Activated CD4-positive, alpha-beta memory T cell treated with anti-CD3 and anti-CD28 coated beads, Interleukin-2, amount 10 ng/mL, durations not matched to agents 7 days and 5 days (primary cell): ENCODE measurements at regions of chr3 and their contacts with region 1.

Region 1: DNA sequence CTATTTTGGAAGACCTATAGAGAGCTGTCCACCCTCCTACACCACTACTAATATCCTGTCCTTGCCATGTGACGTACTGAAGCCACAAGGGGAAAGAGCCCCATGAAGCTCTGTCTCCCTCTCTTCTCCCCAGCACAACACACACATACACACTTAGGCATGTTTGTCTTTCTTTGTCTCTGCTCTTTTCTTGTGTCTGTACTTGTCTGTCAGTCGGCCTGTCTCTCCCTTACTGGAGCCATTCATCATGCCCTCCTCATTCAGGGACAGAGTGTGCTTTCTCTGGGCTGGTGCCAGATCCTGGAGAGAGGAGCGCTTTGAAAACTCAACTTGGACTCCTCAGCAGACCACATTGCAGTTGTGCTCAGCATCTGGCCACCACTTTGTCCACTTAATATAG is 47.6 kb downstream of the PSMD6 start:
- DNase-seq: no peak
- H3K4me3 Mint-ChIP-seq: no peak overlapping the region
- H3K27ac Mint-ChIP-seq: peak overlapping the region; percentile 50
- H3K4me1 Mint-ChIP-seq: peaks cover 94% of the 10 kb centered on the region
- H3K27me3 Mint-ChIP-seq: no peaks in the 10 kb centered on the region

Region 2: DNA sequence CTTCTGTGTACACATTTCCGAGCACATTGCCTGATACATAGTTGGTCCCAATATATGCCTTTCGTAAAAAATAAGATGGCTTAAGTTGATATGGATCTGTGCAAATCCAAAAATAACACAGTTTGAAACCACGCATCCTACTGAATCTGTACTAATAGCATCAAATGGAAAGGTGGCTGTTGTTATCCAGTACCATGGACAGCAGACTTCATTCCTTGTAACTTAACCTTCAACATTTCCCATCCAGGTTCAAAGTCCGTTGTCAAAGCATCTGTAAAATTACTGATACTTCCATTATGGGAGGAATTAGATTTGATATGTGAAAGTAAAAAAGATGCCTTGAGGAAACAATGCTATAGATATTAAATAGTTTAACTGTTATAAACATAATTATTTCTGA is 222.2 kb before region 1 on chr3:
- CTCF ChIA-PET with region 1: no interaction called
- POLR2A ChIA-PET with region 1: no interaction called
- DNase-seq: no peak
- H3K4me3 Mint-ChIP-seq: no peak overlapping the region
- H3K27ac Mint-ChIP-seq: no peak overlapping the region
- H3K4me1 Mint-ChIP-seq: no peaks in the 10 kb centered on the region
- H3K27me3 Mint-ChIP-seq: no peaks in the 10 kb centered on the region

Region 3: DNA sequence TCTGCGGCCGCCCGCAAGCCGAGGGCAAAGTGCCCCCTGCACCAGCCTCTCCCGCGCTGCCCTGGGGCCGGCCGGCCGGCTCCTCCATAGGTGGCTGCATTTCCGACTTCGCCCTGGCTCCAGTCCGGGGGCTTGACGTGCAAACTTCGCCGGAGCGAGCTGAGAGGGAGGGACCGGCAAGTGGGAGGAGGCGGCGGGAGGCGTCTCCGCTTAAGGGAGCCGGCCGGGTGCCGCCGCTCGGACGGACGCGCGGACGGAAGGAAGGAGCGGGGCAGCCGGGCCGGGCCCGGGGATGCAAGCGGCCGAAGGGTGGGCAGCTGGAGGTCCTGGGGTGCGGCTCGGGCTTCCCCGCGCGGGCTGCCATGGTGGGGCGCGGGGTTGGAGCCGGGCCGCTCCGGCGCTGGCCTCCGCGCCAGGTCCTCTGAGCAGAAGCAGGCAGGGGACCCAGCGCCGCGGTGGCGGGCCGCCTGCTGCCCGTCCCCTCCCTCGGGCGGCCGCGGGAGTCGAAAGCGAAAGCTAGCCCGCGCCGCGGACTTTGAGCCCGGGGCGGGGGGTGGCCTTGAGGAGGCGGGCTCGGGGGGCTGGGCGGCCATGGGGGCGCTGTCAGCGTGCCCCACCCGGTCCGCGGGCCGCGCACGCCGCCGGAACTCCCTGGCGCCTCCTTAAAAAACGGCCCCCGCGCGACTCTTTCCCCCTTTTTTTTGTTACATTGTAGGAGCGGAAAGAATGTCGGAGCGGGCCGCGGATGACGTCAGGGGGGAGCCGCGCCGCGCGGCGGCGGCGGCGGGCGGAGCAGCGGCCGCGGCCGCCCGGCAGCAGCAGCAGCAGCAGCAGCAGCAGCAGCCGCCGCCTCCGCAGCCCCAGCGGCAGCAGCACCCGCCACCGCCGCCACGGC is 63.6 kb before region 1 on chr3 and contains the start of gene SCAANT1:
- CTCF ChIA-PET with region 1: interaction called, 3 read pairs
- POLR2A ChIA-PET with region 1: interaction called, 32 read pairs
- DNase-seq: peak; percentile 80
- H3K4me3 Mint-ChIP-seq: peak within 1 kb of the TSS; percentile 85
- H3K27ac Mint-ChIP-seq: peak within 1 kb of the TSS; percentile 96
- H3K4me1 Mint-ChIP-seq: peaks cover 51% of the 10 kb centered on the region
- H3K27me3 Mint-ChIP-seq: no peaks in the 10 kb centered on the region
- total RNA-seq, gene SCAANT1: not detected

Region 4: DNA sequence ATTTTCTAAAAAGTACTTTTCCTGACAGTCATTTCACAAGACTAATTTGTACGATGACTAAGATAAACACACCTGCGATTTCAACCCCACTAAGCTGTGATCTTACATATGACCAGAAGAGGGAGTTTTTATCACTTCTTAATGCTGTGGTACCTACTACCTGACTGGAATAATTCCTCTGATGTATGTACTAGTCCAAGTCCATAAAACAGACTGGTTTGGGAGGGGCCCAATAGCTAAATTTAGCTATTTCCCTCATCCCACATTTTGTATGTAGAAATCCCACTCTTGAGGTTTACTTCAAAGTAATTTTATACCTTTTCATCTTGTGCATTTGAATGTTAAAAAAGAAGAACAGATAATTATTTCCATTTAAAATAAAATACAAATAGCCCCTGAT is 13.8 kb before region 1 on chr3:
- CTCF ChIA-PET with region 1: interaction called, 201 read pairs
- POLR2A ChIA-PET with region 1: interaction called, 249 read pairs
- DNase-seq: no peak
- H3K4me3 Mint-ChIP-seq: no peak overlapping the region
- H3K27ac Mint-ChIP-seq: no peak overlapping the region
- H3K4me1 Mint-ChIP-seq: peaks cover 58% of the 10 kb centered on the region
- H3K27me3 Mint-ChIP-seq: no peaks in the 10 kb centered on the region

Region 5: GRCh38 chr3:64011685-64012084 is 36.0 kb after region 1 on chr3:
- CTCF ChIA-PET with region 1: interaction called, 8 read pairs
- POLR2A ChIA-PET with region 1: interaction called, 12 read pairs
- DNase-seq: no peak
- H3K4me3 Mint-ChIP-seq: no peak overlapping the region
- H3K27ac Mint-ChIP-seq: no peak overlapping the region
- H3K4me1 Mint-ChIP-seq: peaks cover 46% of the 10 kb centered on the region
- H3K27me3 Mint-ChIP-seq: no peaks in the 10 kb centered on the region